Activated T-helper 2 cell treated with anti-CD3 and anti-CD28 coated beads, Interferon-gamma antibody, Interleukin-2, Interleukin-4, amounts not matched to agents 10 μg/mL and 5 μg/mL and 100 μg/mL, durations not matched to agents 14 hours and 24 hours and 36 hours (primary cell): ENCODE measurements at regions of chr3 and their contacts with region 1.

Region 1: GRCh38 chr3:171459942-171460724 is at the start of gene TNIK:
- DNase-seq: peak; percentile 92
- H3K4me3 Mint-ChIP-seq: peak within 1 kb of the TSS; percentile 89
- H3K27ac Mint-ChIP-seq: peak within 1 kb of the TSS; percentile 87
- H3K4me1 Mint-ChIP-seq: peaks cover 43% of the 10 kb centered on the region
- H3K27me3 Mint-ChIP-seq: no peaks in the 10 kb centered on the region
- total RNA-seq, gene TNIK: 39.9 and 44.0 TPM in 2 replicates

Region 2: DNA sequence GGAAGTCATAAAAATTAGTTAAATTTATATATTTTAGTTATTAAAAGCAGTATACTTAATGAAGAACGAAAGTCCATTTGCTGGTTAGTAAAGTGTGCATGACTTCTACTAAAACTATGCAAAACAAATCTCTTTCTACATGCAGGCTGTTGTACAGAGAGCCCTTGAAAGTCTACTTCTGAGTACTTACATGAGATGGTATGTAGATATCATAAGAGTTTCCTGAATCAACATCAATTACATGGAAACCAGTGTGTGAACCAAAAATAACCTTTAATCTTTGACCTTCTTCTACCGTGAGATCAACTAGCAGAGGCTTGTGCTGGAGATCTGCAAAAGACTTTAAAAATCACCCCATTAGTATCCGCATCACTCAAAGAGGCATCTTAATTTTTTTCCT is 391.5 kb before region 1 on chr3:
- intact Hi-C with region 1: no loop called
- DNase-seq: no peak
- H3K4me3 Mint-ChIP-seq: no peak overlapping the region
- H3K27ac Mint-ChIP-seq: no peak overlapping the region
- H3K4me1 Mint-ChIP-seq: peaks cover 6% of the 10 kb centered on the region
- H3K27me3 Mint-ChIP-seq: no peaks in the 10 kb centered on the region

Region 3: DNA sequence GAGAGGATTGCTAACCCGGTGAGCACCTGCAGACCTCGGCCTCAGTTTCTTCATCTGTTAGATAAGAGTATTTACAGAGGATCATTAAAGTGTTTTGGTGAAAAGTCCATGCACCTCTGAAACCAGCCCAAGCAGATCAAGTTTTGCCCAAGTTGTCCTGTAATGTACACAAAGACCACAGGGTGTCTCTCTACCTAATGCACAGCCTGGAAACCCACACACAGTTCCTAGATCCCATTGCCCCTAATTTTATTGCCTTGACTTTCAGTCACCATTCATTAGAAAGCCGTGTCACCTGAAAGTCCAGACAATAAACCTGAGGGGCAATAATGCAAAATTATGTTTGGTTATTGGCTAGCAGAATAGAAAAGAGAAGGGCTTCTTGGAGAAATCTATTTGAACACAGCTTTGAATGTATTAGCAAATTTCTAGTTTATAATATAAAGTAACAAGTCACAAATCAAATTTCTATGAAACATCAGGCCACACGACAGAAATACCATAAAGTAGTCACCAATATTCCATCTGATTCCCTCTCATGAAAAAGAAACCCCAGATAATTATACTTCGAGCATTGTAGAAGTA is 272.3 kb before region 1 on chr3:
- intact Hi-C with region 1: loop called (anchors 1 kb)
- DNase-seq: no peak
- H3K4me3 Mint-ChIP-seq: no peak overlapping the region
- H3K27ac Mint-ChIP-seq: no peak overlapping the region
- H3K4me1 Mint-ChIP-seq: peaks cover 70% of the 10 kb centered on the region
- H3K27me3 Mint-ChIP-seq: no peaks in the 10 kb centered on the region

Region 4: DNA sequence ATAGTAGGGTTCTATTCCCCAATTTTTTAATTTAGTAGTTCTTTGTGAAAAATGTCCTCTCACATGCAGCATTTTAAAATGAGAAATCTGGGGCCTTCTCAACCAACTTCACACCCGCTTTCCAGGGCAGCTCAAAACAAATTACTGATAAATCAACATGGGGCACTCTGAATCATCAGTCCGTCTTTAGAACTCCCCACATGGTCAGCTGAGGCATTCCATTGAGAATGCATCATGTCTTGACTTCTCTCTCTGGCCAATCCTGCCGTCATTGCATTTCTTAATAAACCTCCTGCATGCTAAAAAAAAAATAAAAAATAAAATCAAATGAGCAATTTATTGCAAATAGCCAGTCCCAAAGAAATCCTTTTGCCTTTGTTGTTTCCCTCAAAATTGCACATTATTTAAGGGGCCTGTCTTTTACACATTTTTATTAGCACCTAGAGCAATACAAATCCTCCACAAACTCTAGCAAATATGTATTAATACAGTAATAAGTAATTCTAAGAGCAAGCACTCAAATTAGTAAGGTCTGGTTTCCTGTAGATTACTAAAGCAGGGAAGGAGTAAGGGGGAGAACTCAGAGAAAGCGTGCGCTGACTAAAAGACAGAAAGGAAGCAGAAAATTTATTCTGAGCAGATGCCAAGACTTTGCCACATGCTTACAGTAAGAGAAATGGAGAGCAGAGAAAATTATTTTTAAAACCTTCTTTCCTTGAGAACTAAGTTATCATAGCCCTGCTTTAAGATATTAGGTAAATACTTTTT is 175.6 kb before region 1 on chr3:
- intact Hi-C with region 1: loop called (anchors 2 kb)
- DNase-seq: no peak
- H3K4me3 Mint-ChIP-seq: peak overlapping the region; percentile 34
- H3K27ac Mint-ChIP-seq: peak overlapping the region; percentile 68
- H3K4me1 Mint-ChIP-seq: peaks cover 74% of the 10 kb centered on the region
- H3K27me3 Mint-ChIP-seq: no peaks in the 10 kb centered on the region

Region 5: GRCh38 chr3:171320750-171321558 is 139.2 kb before region 1 on chr3:
- intact Hi-C with region 1: no loop called
- DNase-seq: no peak
- H3K4me3 Mint-ChIP-seq: no peak overlapping the region
- H3K27ac Mint-ChIP-seq: no peak overlapping the region
- H3K4me1 Mint-ChIP-seq: peaks cover 22% of the 10 kb centered on the region
- H3K27me3 Mint-ChIP-seq: no peaks in the 10 kb centered on the region

Region 6: DNA sequence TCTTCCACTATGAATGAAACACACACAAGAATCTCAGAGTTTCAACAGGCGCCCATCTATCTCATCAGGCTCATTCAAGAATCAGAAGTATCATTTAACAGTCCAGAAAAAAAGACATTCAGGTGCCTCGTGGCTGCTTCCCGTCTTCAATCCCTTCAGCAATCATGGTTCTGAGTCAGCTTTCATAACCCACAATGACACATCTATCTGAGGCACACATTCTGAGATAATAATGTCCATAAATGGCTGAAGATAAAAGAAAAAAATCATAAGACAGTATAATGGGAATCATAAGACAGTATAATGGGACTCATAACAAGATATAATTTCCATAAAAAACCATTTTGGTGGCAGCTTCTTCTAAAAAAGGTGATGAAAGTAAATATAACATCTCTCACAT is 52.4 kb before region 1 on chr3:
- intact Hi-C with region 1: loop called (anchors 2 kb)
- DNase-seq: no peak
- H3K4me3 Mint-ChIP-seq: no peak overlapping the region
- H3K27ac Mint-ChIP-seq: peak overlapping the region; percentile 3
- H3K4me1 Mint-ChIP-seq: peaks cover 37% of the 10 kb centered on the region
- H3K27me3 Mint-ChIP-seq: no peaks in the 10 kb centered on the region

Region 7: DNA sequence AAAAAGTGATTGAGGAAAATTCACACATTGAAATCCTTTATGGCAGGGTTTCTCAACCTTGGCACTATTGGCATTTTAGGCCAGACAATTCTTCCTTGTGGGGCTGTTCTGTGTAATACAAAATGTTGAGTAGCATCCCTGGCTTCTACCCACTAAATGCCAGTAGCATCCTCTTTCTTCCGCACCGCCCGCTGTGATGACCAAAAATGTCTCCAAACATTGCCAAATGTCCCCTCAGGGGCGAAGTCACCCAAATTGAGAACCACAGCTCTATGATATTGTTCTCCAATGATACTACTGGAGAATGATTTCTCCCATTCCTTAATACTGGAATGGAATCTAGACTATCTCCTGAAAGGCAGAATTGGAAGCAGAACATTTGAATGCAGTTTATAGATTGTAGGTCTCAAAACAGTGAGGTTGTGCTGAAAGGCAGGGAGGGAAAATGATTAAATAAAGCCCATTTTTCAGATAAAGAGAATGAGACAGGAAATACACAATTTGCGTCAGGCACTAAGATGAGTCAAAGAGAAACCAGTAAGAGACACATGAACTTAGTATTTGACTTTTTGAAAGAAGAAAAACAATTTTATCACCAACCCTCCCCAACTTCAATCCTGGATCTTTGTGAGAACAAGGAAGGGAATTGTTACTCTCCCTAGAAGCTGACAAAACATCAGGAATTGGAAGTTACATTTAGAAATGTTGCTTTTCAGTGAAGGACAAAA is 101.6 kb after region 1 on chr3:
- intact Hi-C with region 1: loop called (anchors 1 kb)
- DNase-seq: no peak
- H3K4me3 Mint-ChIP-seq: peak overlapping the region; percentile 58
- H3K27ac Mint-ChIP-seq: peak overlapping the region; percentile 98
- H3K4me1 Mint-ChIP-seq: peaks cover 55% of the 10 kb centered on the region
- H3K27me3 Mint-ChIP-seq: no peaks in the 10 kb centered on the region